IMR-90 (cell line): ENCODE measurements at regions of chr11 and their contacts with region 1.

Region 1: GRCh38 chr11:127074151-127074761 is 73.7 kb upstream of the KIRREL3 start:
- DNase-seq: peak; percentile 72
- ATAC-seq: peak; percentile 65
- H3K4me3 ChIP-seq: no peak overlapping the region
- H3K27ac ChIP-seq: no peak overlapping the region
- H3K4me1 ChIP-seq: 0 out of 2 replicates have a peak, but pooled peaks cover 2% of the 10 kb centered on the region
- H3K27me3 ChIP-seq: peaks cover 50% of the 10 kb centered on the region
- CTCF ChIP-seq: peak; percentile 56
- POLR2A ChIP-seq: no peak
- RAD21 ChIP-seq: peak; percentile 75

Region 2: DNA sequence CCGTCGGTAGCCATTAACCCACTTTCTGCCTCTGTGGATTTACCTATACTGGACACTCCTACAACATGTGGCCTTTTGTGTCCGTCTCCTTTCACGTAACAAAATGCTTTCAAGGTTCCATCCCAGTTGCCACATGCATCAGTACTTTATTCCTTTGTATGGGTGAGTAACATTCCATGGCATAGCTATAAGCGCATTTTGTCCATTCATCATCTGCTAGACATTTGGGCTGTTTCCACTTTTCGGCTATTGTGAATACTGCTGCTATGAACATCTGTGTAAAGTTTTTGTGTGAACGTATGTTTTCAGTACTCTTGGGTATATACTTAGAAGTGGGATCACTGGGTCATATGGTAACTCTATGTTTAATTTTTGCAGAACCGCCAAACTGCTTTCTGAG is 461.6 kb before region 1 on chr11:
- CTCF ChIA-PET with region 1: no interaction called
- POLR2A ChIA-PET with region 1: no interaction called
- dilution Hi-C with region 1: no loop called
- in situ Hi-C with region 1: loop called (anchors 10 kb)
- intact Hi-C with region 1: loop called (anchors 5 kb)
- DNase-seq: no peak
- ATAC-seq: no peak
- H3K4me3 ChIP-seq: no peak overlapping the region
- H3K27ac ChIP-seq: no peak overlapping the region
- H3K4me1 ChIP-seq: no peaks in the 10 kb centered on the region
- H3K27me3 ChIP-seq: no peaks in the 10 kb centered on the region
- CTCF ChIP-seq: no peak
- POLR2A ChIP-seq: no peak
- RAD21 ChIP-seq: no peak

Region 3: GRCh38 chr11:126695293-126695692 is 379.0 kb before region 1 on chr11:
- CTCF ChIA-PET with region 1: no interaction called
- POLR2A ChIA-PET with region 1: interaction called, 16 read pairs
- dilution Hi-C with region 1: no loop called
- in situ Hi-C with region 1: no loop called
- intact Hi-C with region 1: no loop called
- DNase-seq: no peak
- ATAC-seq: no peak
- H3K4me3 ChIP-seq: no peak overlapping the region
- H3K27ac ChIP-seq: no peak overlapping the region
- H3K4me1 ChIP-seq: no peaks in the 10 kb centered on the region
- H3K27me3 ChIP-seq: no peaks in the 10 kb centered on the region
- CTCF ChIP-seq: no peak
- POLR2A ChIP-seq: no peak
- RAD21 ChIP-seq: no peak

Region 4: DNA sequence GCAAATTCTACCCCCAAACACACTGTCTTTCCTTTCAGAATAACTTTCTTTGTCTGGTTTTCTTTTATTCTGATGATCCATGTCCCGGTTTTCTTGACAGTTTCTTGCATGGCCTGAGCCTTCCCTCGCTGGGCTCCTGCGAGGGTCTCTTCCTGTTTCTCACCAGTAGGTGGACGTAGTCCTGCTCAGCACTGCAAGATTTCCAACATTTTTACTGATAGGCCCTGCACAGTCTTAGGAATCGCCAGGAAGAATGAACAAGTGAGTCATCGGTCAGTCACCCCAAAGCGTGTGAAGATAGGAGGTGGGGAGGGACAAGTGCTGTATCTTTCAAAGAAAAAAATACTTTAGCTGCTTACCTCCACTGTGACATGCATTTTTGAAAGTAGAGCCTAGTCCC is 56.8 kb before region 1 on chr11:
- CTCF ChIA-PET with region 1: interaction called, 3 read pairs
- POLR2A ChIA-PET with region 1: no interaction called
- dilution Hi-C with region 1: no loop called
- in situ Hi-C with region 1: no loop called
- intact Hi-C with region 1: loop called (anchors 1 kb)
- DNase-seq: peak; percentile 93
- ATAC-seq: peak; percentile 100
- H3K4me3 ChIP-seq: no peak overlapping the region
- H3K27ac ChIP-seq: no peak overlapping the region
- H3K4me1 ChIP-seq: peaks cover 2% of the 10 kb centered on the region; the same call in 1 of the 2 replicates
- H3K27me3 ChIP-seq: peaks cover 45% of the 10 kb centered on the region
- CTCF ChIP-seq: peak; percentile 72
- POLR2A ChIP-seq: no peak
- RAD21 ChIP-seq: peak; percentile 69

Region 5: DNA sequence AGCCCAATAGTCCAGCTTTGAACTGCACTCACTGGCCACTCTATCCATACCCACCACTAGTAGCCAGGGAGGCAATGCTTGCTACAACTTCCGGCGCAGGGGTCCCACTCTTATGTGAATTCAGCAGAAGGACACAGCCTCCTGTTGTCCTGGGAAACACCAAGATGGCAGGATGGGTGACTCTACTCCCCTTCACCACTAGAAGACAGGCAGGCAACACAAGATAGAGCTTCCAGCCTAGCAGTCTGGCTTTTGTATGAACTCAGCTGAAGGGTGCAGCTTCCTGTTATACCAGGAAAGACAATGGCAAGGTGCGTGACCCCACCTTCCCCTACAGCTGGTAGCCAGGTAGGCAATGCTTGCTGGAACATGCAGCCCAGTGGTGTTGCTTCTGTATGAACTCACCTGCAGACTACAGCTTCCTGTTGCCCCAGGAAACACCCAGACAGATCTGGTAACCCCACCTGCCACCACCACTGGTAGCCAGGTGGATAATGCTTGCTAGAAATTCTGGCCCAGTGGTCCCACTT is 131.5 kb after region 1 on chr11:
- CTCF ChIA-PET with region 1: no interaction called
- POLR2A ChIA-PET with region 1: no interaction called
- dilution Hi-C with region 1: no loop called
- in situ Hi-C with region 1: no loop called
- intact Hi-C with region 1: no loop called
- DNase-seq: no peak
- ATAC-seq: no peak
- H3K4me3 ChIP-seq: no peak overlapping the region
- H3K27ac ChIP-seq: no peak overlapping the region
- H3K4me1 ChIP-seq: no peaks in the 10 kb centered on the region
- H3K27me3 ChIP-seq: no peaks in the 10 kb centered on the region
- CTCF ChIP-seq: no peak
- POLR2A ChIP-seq: no peak
- RAD21 ChIP-seq: no peak

Region 6: GRCh38 chr11:127531167-127531566 is 456.9 kb after region 1 on chr11:
- CTCF ChIA-PET with region 1: no interaction called
- POLR2A ChIA-PET with region 1: no interaction called
- dilution Hi-C with region 1: no loop called
- in situ Hi-C with region 1: no loop called
- intact Hi-C with region 1: no loop called
- DNase-seq: no peak
- ATAC-seq: no peak
- H3K4me3 ChIP-seq: no peak overlapping the region
- H3K27ac ChIP-seq: no peak overlapping the region
- H3K4me1 ChIP-seq: no peaks in the 10 kb centered on the region
- H3K27me3 ChIP-seq: no peaks in the 10 kb centered on the region
- CTCF ChIP-seq: no peak
- POLR2A ChIP-seq: no peak
- RAD21 ChIP-seq: no peak